Psoas muscle (tissue), 8 donors: ENCODE measurements at regions of chr16 and their contacts with region 1.

Region 1: DNA sequence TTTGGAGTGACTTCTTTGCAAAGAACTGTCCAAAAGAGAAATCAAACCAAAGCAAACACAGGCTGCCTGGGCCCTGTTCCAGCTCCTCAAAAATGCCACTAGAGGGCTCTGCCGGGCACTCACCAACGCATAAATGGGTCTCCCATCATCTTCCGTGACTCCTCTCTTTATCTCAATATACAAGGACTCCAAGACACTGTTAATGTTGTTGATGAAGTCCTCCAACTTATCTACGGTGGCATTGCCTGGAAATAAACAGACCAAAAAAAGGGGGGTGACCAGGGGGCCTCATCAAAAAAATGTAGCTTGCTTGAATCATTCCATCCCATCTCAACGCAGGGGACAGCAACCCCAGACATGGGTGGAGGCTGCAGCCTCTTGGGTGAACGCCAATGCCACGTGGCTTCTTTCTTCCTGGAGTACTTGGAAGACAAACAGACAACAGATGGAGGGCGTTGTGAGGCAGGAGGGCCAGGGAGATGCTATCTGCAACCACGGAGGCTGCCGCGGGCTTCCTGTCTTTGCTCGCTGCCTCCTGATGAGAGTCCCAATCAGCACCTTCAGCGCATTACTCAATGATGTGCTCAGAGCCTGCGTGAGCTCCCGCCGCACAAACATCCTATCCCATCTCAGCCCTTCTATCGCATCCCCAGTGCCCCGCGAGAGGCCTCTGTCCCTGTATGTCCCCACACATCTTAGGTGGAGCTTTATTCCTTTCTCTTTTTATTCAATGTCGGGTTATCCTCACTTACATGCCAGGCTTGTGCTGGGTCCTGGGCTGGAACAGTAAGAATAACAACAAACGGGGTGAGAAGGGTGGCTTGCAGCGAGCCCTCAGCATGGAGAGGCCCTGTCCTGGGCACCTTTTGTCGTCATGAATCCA is 32.0 kb downstream of the KDM8 start:
- DNase-seq: peak; percentile 86 to 92
- ATAC-seq: peak; percentile 46 to 81 (median 66)
- H3K4me3 ChIP-seq: no peak overlapping the region
- H3K27ac ChIP-seq: peak overlapping the region; percentile 19
- H3K4me1 ChIP-seq: peaks cover 9% of the 10 kb centered on the region
- H3K27me3 ChIP-seq: no peaks in the 10 kb centered on the region
- CTCF ChIP-seq: peak; percentile 77

Region 2: DNA sequence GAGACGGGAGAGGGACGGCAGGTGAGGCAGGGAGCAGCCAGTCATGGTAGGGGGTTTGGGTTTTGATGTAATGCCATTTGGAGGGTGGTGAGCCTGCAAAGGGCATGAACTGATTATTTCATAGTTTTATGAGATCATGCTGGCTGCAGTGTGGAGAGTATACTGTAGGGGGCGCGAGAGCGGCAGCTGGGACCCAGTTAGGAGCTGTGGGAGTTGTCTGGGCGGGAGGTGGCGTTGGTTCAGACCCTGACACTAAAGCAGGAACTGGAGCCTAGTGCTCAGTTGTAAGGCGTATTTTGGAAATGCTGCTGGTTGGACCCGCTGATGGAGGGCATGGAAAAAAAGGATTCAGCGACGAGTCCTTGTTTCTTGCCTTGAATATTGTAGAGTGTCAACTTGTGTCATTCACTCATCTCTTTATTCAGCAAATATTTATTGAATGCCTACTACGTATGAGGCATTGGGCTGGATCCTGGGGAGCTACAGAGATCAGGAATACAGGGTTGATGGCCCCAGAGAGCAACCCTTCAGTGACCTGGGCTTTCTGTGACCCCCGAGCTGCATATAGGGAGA is 55.7 kb before region 1 on chr16:
- intact Hi-C with region 1: loop called (anchors 5 kb)
- DNase-seq: peak; percentile 84 to 91
- ATAC-seq: peak; percentile 92 to 95 (median 94)
- H3K4me3 ChIP-seq: no peak overlapping the region
- H3K27ac ChIP-seq: no peak overlapping the region
- H3K4me1 ChIP-seq: no peaks in the 10 kb centered on the region
- H3K27me3 ChIP-seq: no peaks in the 10 kb centered on the region
- CTCF ChIP-seq: peak; percentile 94

Region 3: GRCh38 chr16:27199736-27200135 is 35.6 kb before region 1 on chr16:
- intact Hi-C with region 1: loop called in 1 of 2 experiments (anchors 5 kb)
- DNase-seq: no peak
- ATAC-seq: no peak
- H3K4me3 ChIP-seq: no peak overlapping the region
- H3K27ac ChIP-seq: no peak overlapping the region
- H3K4me1 ChIP-seq: peaks cover 13% of the 10 kb centered on the region
- H3K27me3 ChIP-seq: no peaks in the 10 kb centered on the region
- CTCF ChIP-seq: no peak

Region 4: GRCh38 chr16:27217256-27217655 is 18.0 kb before region 1 on chr16:
- intact Hi-C with region 1: no loop called
- DNase-seq: no peak
- ATAC-seq: peak in 1 of 4 donors; percentile 46
- H3K4me3 ChIP-seq: no peak overlapping the region
- H3K27ac ChIP-seq: peak overlapping the region; percentile 16
- H3K4me1 ChIP-seq: peaks cover 19% of the 10 kb centered on the region
- H3K27me3 ChIP-seq: no peaks in the 10 kb centered on the region
- CTCF ChIP-seq: no peak

Region 5: DNA sequence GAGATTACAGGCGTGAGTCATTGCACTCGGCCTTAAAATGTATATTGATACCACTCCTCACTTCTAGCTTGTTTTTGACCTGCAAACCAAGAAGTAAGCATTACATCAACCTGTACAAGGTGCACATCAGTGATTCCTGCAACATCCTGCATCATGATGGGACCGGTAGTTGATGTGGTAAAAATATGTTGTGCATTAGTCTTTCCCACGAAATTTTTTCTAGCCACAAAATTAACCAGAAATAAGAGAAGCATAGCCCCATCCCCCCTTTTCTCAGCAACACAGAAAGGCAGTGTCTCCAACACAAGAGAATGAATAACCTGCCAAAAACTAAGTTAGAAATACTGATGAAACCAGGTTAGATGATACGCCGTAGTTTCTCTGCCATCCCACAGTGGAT is 54.4 kb after region 1 on chr16:
- intact Hi-C with region 1: no loop called
- DNase-seq: no peak
- ATAC-seq: no peak
- H3K4me3 ChIP-seq: no peak overlapping the region
- H3K27ac ChIP-seq: no peak overlapping the region
- H3K4me1 ChIP-seq: no peaks in the 10 kb centered on the region
- H3K27me3 ChIP-seq: no peaks in the 10 kb centered on the region
- CTCF ChIP-seq: no peak

Region 6: GRCh38 chr16:27367461-27368357 is 132.4 kb after region 1 on chr16:
- intact Hi-C with region 1: loop called in 1 of 2 experiments (anchors 2 kb)
- DNase-seq: peak; percentile 78 to 85
- ATAC-seq: peak; percentile 68 to 81 (median 78)
- H3K4me3 ChIP-seq: peak overlapping the region; percentile 42
- H3K27ac ChIP-seq: peak overlapping the region; percentile 3
- H3K4me1 ChIP-seq: no peaks in the 10 kb centered on the region
- H3K27me3 ChIP-seq: peaks cover 0 to 4% (median 0%) of the 10 kb centered on the region in 3 donors
- CTCF ChIP-seq: peak; percentile 67

Region 7: GRCh38 chr16:27449434-27450195 is 214.3 kb after region 1 on chr16:
- intact Hi-C with region 1: loop called in 1 of 2 experiments (anchors 10 kb)
- DNase-seq: no peak
- ATAC-seq: no peak
- H3K4me3 ChIP-seq: no peak overlapping the region
- H3K27ac ChIP-seq: no peak overlapping the region
- H3K4me1 ChIP-seq: no peaks in the 10 kb centered on the region
- H3K27me3 ChIP-seq: peaks cover 0 to 35% (median 17%) of the 10 kb centered on the region in 3 donors
- CTCF ChIP-seq: no peak

Region 8: DNA sequence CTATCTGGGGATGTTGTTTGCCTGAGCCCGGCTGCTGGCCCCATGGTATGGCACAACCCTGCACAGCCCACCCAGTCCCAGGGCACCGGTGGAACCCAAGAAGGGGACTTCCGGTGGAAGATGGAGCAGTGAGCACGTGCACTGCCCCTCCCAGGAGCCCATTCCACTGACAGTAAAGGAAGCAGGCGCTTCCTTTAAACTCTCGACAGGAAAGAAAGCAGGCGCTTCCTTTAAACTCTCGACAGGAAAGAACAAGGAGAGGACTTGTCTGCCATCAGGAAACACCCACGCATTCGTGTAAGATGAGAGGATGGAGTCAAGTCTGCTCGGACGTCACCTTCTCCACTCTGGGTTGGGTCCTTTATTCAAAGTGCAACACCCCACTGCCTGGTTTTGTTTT is 220.4 kb after region 1 on chr16:
- intact Hi-C with region 1: loop called (anchors 5 to 10 kb)
- DNase-seq: peak in 1 of 2 donors; percentile 30
- ATAC-seq: no peak
- H3K4me3 ChIP-seq: no peak overlapping the region
- H3K27ac ChIP-seq: no peak overlapping the region
- H3K4me1 ChIP-seq: peaks cover 10% of the 10 kb centered on the region
- H3K27me3 ChIP-seq: no peaks in the 10 kb centered on the region
- CTCF ChIP-seq: no peak